ENCODE measurements at regions of chr7 and their contacts with region 1.

Region 1: GRCh38 chr7:74254129-74254857 is at the start of gene RFC2:
- DNase-seq: peak; percentile 99
- total RNA-seq, gene RFC2: 8.3 TPM

Region 2: DNA sequence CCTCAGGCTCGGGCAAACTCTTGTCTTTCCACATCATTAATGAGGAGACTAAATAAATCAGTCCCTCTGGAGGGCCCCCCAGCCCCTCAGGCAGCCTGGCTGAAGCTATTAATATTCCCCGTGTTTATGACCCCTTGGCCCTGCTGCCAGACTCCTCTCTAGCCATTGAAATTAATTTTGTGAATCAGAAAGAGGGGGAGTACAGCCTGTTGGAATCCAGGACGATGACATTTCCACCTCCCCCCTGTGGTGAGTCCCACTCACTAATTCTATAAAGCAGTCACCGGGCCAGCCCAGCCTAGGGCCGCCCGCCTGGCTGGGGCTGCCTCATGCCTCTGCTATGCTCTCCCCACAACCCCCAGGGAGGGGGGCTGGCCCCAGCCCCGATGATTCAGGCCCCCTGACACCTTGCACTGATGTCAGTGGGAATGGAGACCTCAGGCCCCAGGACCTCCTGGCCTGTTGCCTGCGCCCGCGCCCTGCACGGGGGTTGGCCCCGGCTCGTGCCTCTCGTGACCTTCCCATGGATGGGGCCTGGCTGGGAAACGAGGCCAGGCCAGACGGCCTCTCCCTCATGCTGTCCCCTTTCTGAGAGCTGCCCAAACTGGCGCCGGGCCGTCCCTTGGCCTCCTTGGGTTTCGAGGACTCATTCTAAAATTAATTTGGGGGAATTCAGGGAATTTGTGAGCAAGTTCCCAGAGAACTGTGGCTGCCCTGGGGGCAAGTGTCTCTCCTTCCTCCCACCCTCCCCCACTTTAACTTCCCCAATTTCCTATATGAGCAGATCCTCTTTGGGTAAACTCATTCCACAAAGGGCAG is 359.4 kb before region 1 on chr7:
- intact Hi-C with region 1: no loop called
- DNase-seq: no peak

Region 3: GRCh38 chr7:74289018-74289658 is 34.8 kb after region 1 on chr7 and contains the start of gene CLIP2:
- intact Hi-C with region 1: loop called (anchors 5 kb)
- DNase-seq: peak; percentile 89
- total RNA-seq, gene CLIP2: 9.9 TPM